ENCODE measurements at regions of chr2 and their contacts with region 1.

Region 1: DNA sequence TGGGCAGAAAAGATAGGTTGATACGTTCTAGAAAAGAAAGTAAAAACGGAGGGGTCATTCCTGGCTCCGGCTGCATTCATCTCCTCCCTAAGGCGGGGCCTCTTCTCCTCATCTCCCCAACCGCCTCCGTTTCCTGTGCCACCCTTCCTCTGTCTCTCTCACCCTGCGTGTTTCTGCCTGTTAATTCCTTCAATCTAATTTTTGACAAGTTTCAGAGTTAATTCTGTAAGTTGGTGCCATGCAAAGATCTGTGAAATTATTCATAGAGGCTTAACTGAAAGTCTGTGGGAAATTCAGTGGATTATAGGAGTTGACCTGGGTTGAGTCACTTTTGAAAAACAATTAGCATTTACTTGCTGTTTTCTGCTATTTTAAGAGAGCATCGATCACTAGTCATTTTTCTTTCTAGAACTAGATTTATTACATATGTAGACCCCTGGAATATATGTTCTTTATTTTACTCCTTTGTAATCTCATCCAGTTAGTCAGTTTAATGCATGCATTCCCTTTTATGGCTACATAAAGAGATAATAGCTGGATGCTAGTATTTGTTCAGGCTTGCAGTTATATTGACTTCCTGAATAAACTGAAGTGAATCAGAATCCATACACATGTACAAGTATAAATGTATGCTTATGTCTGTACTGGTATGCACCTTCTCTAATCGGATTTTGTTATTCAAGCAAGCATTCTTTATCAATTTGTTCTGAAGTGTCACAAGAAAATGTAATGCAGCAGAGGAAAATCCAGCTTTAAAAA is 91.1 kb downstream of the EML6 start:
- DNase-seq: no peak
- ATAC-seq: no peak
- H3K4me3 ChIP-seq: no peak overlapping the region
- H3K27ac ChIP-seq: no peak overlapping the region
- H3K4me1 ChIP-seq: no peaks in the 10 kb centered on the region
- H3K27me3 ChIP-seq: peaks cover 27% of the 10 kb centered on the region
- CTCF ChIP-seq: no peak
- POLR2A ChIP-seq: no peak
- RAD21 ChIP-seq: no peak

Region 2: DNA sequence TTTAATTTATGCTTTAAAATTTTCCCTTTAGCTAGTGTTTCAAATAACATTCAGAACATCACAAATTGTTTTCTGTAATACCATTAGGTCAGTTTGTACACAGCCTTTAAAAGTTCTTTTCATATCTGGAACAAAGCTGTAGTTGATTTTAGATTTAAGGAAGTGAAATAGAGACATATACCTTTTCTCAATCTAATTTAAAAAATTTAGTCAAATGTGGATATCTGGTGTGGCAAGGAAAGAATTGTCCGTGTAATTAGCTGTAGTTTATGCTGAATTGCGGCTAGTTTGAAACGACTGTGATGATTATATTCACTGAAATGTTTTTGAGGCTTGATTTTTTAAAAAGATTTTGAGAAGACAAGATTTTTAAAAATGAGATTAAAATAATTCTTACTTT is 31.2 kb before region 1 on chr2:
- CTCF ChIA-PET with region 1: no interaction called
- POLR2A ChIA-PET with region 1: interaction called, 3 read pairs
- dilution Hi-C with region 1: no loop called
- in situ Hi-C with region 1: no loop called
- intact Hi-C with region 1: loop called (anchors 5 kb)
- DNase-seq: no peak
- ATAC-seq: no peak
- H3K4me3 ChIP-seq: no peak overlapping the region
- H3K27ac ChIP-seq: no peak overlapping the region
- H3K4me1 ChIP-seq: no peaks in the 10 kb centered on the region
- H3K27me3 ChIP-seq: peaks cover 6% of the 10 kb centered on the region
- CTCF ChIP-seq: no peak
- POLR2A ChIP-seq: no peak
- RAD21 ChIP-seq: no peak

Region 3: DNA sequence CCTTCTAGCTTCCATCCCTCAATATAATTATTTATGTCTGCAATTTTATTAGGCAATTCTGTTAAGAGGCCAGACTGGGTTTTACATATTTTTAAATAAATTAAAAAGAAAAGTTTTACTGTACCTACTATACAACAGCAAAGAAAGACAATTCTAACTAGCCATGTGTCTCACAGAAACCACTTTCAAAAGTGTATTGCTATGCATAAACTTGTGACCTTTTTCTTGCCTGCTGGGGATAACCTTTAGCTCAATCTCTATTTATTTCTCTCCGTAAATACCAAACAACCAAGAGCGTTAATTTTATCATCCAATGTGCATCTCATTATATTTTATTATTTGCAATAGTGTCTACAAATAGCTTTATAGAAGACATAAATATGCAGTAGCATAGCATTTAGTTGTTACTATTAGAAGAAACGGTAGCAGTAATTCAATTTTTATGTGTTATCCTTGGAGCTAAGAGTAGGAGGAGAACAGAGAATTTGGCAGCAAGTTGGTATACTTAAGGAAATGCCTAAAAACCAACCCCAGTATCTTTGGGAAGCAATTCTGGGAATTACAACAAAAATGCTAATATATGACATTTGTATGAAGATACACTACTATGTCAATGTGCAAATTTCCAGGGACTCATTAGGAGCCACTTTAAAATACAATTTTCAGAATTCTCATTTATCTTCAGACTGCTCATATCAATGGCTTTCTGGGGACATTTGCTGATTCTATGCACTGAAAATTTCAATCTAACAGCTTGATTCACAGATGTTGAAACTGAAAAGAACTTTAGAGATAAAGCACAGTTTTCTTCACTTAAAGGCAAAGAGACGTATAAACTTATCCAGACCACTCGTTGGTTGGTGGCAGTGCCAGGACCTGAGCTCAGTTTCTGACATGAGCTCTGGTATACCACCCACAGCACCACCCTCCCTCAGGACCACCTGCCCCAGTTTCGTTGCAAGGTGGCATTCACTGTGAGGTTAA is 258.7 kb after region 1 on chr2:
- CTCF ChIA-PET with region 1: no interaction called
- POLR2A ChIA-PET with region 1: no interaction called
- dilution Hi-C with region 1: no loop called
- in situ Hi-C with region 1: no loop called
- intact Hi-C with region 1: no loop called
- DNase-seq: no peak
- ATAC-seq: no peak
- H3K4me3 ChIP-seq: no peak overlapping the region
- H3K27ac ChIP-seq: no peak overlapping the region
- H3K4me1 ChIP-seq: no peaks in the 10 kb centered on the region
- H3K27me3 ChIP-seq: no peaks in the 10 kb centered on the region
- CTCF ChIP-seq: no peak
- POLR2A ChIP-seq: no peak
- RAD21 ChIP-seq: no peak

Measured in IMR-90 (cell line).